ENCODE measurements at regions of chr19 and their contacts with region 1.

Region 1: DNA sequence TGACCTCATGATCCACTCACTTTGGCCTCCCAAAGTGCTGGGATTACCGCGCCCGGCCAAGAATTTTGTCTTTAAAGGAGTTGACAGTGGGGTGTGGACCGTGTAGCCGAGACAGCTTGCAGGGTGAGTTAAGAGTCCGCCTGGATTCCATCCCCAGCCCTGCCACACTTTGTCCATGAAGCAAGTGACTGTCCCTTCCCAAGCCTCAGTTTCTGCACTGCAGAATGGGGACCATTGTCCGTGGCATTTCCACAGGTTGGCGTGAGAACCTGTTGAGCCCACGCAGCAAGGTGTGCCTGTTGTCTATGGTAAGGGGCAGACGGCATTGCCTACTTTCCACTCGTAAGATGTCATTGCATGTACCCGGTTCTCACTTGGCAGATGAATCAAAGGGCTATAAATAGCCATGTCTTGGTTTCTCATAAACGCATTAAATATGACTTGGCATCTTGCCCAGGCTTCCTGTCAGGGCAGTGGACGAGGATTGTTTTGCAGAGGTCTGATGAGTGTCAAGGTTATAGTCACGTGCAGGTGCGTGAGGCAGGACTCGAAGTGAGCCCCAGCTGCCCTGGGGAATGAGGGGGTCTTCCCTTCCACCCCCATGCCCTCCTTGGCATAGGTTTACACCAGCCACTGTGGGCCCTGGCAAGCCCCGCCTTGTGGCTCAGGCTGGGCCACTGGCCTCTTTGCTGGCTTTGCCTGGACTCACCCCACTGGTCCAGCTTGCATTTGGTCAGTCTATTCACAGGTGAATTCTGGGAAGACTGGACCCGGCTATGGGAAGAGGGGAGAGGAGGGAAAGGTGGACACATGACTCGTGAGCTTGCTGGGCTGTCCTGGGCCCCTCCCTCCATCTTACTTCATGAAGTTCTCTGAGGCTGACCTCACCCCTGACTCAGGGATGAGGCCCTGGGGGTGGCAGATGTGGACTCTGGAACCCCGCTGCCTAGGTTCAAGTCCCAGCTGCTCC is 14.6 kb downstream of the FAM187B start:
- DNase-seq: peak; percentile 89
- H3K4me3 Mint-ChIP-seq: peak overlapping the region; percentile 35
- H3K27ac Mint-ChIP-seq: peak overlapping the region; percentile 92
- H3K4me1 Mint-ChIP-seq: peaks cover 64% of the 10 kb centered on the region
- H3K27me3 Mint-ChIP-seq: no peaks in the 10 kb centered on the region

Region 2: DNA sequence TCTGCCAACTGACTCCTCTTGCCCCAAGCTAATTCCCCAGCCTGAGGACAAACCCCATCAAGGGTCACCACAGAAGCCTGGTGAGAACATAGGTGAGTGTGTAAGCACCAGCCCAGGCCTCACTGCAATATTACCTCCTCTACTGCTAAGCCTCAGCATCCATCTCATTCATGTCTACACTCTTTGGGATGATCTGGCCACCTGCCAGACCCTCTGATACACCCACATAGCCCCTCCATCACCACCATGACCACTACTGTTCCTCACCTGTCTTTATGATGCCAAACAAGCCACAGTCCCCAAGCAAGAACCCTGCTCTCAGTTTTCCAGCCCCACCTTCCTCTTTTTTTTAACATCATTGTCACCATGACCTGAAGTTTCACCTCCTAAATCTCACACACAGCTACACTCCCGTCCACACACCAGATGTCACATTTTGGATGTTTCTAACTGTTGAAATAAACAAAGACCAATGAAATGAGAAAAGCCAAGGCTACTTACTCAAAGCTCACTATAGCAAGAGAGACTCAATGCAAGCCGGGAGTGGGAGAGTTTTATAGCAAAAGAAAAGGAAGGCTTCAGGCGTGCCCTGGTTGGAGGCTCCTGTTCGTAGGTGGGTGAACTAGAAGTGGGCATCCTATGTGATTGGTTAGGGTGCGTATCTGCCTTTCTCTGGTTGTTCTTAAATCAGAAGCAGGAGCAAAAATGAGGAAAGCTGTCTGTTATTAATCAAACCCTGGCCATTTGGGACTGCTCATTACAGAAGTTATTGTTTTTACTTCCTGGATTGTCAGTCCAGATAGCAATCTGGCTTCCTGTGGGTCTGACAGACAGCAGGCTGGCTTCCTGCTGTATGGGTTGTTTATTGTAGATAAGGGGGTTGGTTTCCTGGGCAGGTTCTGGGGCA is 251.9 kb before region 1 on chr19:
- CTCF ChIA-PET with region 1: no interaction called
- POLR2A ChIA-PET with region 1: no interaction called
- intact Hi-C with region 1: no loop called
- DNase-seq: peak; percentile 28
- H3K4me3 Mint-ChIP-seq: peak overlapping the region; percentile 94
- H3K27ac Mint-ChIP-seq: peak overlapping the region; percentile 38
- H3K4me1 Mint-ChIP-seq: peaks cover 26% of the 10 kb centered on the region
- H3K27me3 Mint-ChIP-seq: no peaks in the 10 kb centered on the region

Region 3: GRCh38 chr19:34999498-35000341 is 214.2 kb before region 1 on chr19 and contains the start of gene GRAMD1A:
- CTCF ChIA-PET with region 1: no interaction called
- POLR2A ChIA-PET with region 1: no interaction called
- intact Hi-C with region 1: loop called (anchors 10 kb)
- DNase-seq: peak; percentile 87
- H3K4me3 Mint-ChIP-seq: peak within 1 kb of the TSS; percentile 100
- H3K27ac Mint-ChIP-seq: peak within 1 kb of the TSS; percentile 99
- H3K4me1 Mint-ChIP-seq: peaks cover 66% of the 10 kb centered on the region
- H3K27me3 Mint-ChIP-seq: no peaks in the 10 kb centered on the region
- total RNA-seq, gene GRAMD1A: 204 to 223 TPM

Region 4: GRCh38 chr19:35066691-35067563 is 147.0 kb before region 1 on chr19:
- CTCF ChIA-PET with region 1: interaction called, 5 read pairs
- POLR2A ChIA-PET with region 1: no interaction called
- intact Hi-C with region 1: loop called (anchors 10 kb)
- DNase-seq: peak; percentile 94
- H3K4me3 Mint-ChIP-seq: peak overlapping the region; percentile 21
- H3K27ac Mint-ChIP-seq: peak overlapping the region; percentile 55
- H3K4me1 Mint-ChIP-seq: peaks cover 18% of the 10 kb centered on the region
- H3K27me3 Mint-ChIP-seq: no peaks in the 10 kb centered on the region

Region 5: GRCh38 chr19:35140962-35141637 is 72.8 kb before region 1 on chr19:
- CTCF ChIA-PET with region 1: interaction called, 17 read pairs
- POLR2A ChIA-PET with region 1: interaction called, 4 read pairs
- intact Hi-C with region 1: no loop called
- DNase-seq: peak; percentile 99
- H3K4me3 Mint-ChIP-seq: peak overlapping the region; percentile 71
- H3K27ac Mint-ChIP-seq: no peak overlapping the region
- H3K4me1 Mint-ChIP-seq: peaks cover 30% of the 10 kb centered on the region
- H3K27me3 Mint-ChIP-seq: no peaks in the 10 kb centered on the region

Region 6: GRCh38 chr19:35154525-35155406 is 59.2 kb before region 1 on chr19 and contains the start of gene FXYD5:
- CTCF ChIA-PET with region 1: interaction called, 4 read pairs
- POLR2A ChIA-PET with region 1: interaction called, 6 read pairs
- intact Hi-C with region 1: loop called (anchors 1 kb)
- DNase-seq: peak; percentile 93
- H3K4me3 Mint-ChIP-seq: peak within 1 kb of the TSS; percentile 98
- H3K27ac Mint-ChIP-seq: peak within 1 kb of the TSS; percentile 99
- H3K4me1 Mint-ChIP-seq: peaks cover 50% of the 10 kb centered on the region
- H3K27me3 Mint-ChIP-seq: no peaks in the 10 kb centered on the region
- total RNA-seq, gene FXYD5: 334 to 360 TPM

Region 7: GRCh38 chr19:35247526-35248306 is 33.8 kb after region 1 on chr19:
- CTCF ChIA-PET with region 1: interaction called, 4 read pairs
- POLR2A ChIA-PET with region 1: no interaction called
- intact Hi-C with region 1: loop called (anchors 2 kb)
- DNase-seq: peak; percentile 76
- H3K4me3 Mint-ChIP-seq: peak overlapping the region; percentile 86
- H3K27ac Mint-ChIP-seq: peak overlapping the region; percentile 96
- H3K4me1 Mint-ChIP-seq: peaks cover 44% of the 10 kb centered on the region
- H3K27me3 Mint-ChIP-seq: peaks cover 1% of the 10 kb centered on the region

Region 8: DNA sequence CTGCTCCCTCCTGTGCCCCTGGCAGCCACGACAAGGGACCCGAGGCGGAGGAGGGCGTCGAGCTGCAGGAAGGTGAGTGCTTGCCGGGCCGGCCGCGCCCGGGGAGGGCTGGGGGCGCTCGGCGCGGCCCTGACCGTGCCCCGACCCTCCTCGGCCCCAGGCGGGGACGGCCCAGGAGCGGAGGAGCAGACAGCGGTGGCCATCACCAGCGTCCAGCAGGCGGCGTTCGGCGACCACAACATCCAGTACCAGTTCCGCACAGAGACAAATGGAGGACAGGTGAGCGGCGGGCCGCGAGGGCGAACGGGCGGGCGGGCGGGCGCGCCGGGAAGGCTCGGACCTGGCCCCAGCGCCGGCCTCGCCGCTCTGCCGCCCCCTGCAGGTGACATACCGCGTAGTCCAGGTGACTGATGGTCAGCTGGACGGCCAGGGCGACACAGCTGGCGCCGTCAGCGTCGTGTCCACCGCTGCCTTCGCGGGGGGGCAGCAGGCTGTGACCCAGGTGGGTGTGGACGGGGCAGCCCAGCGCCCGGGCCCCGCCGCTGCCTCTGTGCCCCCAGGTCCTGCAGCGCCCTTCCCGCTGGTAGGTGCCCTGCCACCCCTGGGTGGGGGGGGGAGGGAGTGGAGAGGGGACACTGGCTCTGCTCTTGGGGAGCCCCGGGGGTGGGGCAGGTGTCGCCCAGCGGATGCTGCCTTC is 55.6 kb after region 1 on chr19:
- CTCF ChIA-PET with region 1: interaction called, 3 read pairs
- POLR2A ChIA-PET with region 1: interaction called, 3 read pairs
- intact Hi-C with region 1: loop called (anchors 2 kb)
- DNase-seq: peak; percentile 88
- H3K4me3 Mint-ChIP-seq: peak overlapping the region; percentile 56
- H3K27ac Mint-ChIP-seq: peak overlapping the region; percentile 74
- H3K4me1 Mint-ChIP-seq: peaks cover 28% of the 10 kb centered on the region
- H3K27me3 Mint-ChIP-seq: no peaks in the 10 kb centered on the region